Esophagus muscularis mucosa (tissue), 4 donors: ENCODE measurements at regions of chr14 and their contacts with region 1.

Region 1: GRCh38 chr14:81220830-81221578 is at the start of gene GTF2A1:
- DNase-seq: peak; percentile 99
- H3K4me3 ChIP-seq: peak within 1 kb of the TSS; percentile 78 to 84 (median 81)
- H3K27ac ChIP-seq: peak within 1 kb of the TSS; percentile 96 to 99 (median 98)
- H3K4me1 ChIP-seq: peaks cover 22 to 35% (median 32%) of the 10 kb centered on the region in 4 donors
- H3K27me3 ChIP-seq: no peaks in the 10 kb centered on the region
- CTCF ChIP-seq: no peak
- EP300 ChIP-seq: no peak
- POLR2A ChIP-seq: peak; percentile 98
- total RNA-seq, gene GTF2A1: 17.1 to 35.1 (median 28.4) TPM

Region 2: GRCh38 chr14:81366214-81366613 is 145.2 kb after region 1 on chr14:
- intact Hi-C with region 1: no loop called
- DNase-seq: peak; percentile 62
- H3K4me3 ChIP-seq: no peak overlapping the region
- H3K27ac ChIP-seq: no peak overlapping the region
- H3K4me1 ChIP-seq: no peaks in the 10 kb centered on the region
- H3K27me3 ChIP-seq: peaks cover 0 to 8% (median 0%) of the 10 kb centered on the region in 4 donors
- CTCF ChIP-seq: no peak
- EP300 ChIP-seq: no peak
- POLR2A ChIP-seq: no peak

Region 3: GRCh38 chr14:81474148-81474492 is 253.1 kb after region 1 on chr14:
- intact Hi-C with region 1: no loop called
- DNase-seq: no peak
- H3K4me3 ChIP-seq: no peak overlapping the region
- H3K27ac ChIP-seq: no peak overlapping the region
- H3K4me1 ChIP-seq: peaks cover 0 to 4% (median 2%) of the 10 kb centered on the region in 4 donors
- H3K27me3 ChIP-seq: no peaks in the 10 kb centered on the region
- CTCF ChIP-seq: no peak
- EP300 ChIP-seq: no peak
- POLR2A ChIP-seq: no peak

Region 4: GRCh38 chr14:82387699-82388098 is 1166.7 kb after region 1 on chr14:
- intact Hi-C with region 1: loop called (anchors 10 kb)
- DNase-seq: no peak
- H3K4me3 ChIP-seq: no peak overlapping the region
- H3K27ac ChIP-seq: peak overlapping the region; percentile 74 to 86 (median 80)
- H3K4me1 ChIP-seq: peaks cover 0 to 33% (median 8%) of the 10 kb centered on the region in 4 donors
- H3K27me3 ChIP-seq: no peaks in the 10 kb centered on the region
- CTCF ChIP-seq: no peak
- EP300 ChIP-seq: peak; percentile 93
- POLR2A ChIP-seq: no peak